ENCODE measurements at regions of chr18 and their contacts with region 1.

Region 1: DNA sequence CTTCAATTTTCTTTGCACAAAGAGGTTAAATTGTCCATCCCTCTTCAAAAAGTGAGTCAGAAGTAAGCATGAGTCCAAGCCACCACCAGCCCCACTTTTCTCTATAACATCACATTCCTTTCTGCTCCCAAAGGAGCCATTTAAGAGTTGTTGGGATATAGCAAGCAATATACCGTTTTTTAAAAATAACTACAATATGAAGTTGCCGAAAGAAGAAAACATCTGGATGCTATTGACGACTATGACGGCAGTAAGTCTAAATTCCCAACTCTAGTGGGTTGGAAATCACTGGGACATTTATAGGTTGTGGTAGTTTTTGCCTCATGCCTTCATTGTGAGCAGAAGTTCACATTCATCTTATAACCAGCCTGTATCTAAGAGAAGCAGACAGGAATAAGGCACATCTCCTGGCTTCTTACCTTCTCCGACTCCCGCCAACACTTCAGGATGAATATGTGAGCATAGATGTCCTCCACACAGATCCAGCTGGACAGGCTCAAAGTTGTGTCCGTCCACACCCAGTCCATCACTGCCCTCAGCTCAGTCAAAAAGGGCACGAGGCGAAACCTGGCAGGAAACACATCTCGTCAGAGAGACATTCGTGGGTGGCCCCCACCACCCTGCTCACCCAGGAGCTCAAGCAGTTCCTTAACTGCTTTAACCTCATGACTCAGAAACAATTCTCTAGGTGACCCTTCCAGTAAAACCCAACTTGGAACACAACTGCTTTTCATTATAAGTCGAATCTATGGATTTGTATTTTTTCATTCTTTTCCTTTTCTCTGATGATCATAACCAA is 163.6 kb downstream of the NAPG start:
- DNase-seq: no peak
- ATAC-seq: no peak
- H3K4me3 Mint-ChIP-seq: no peak overlapping the region
- H3K27ac Mint-ChIP-seq: no peak overlapping the region
- H3K4me1 Mint-ChIP-seq: no peaks in the 10 kb centered on the region
- H3K27me3 Mint-ChIP-seq: peaks cover 2% of the 10 kb centered on the region

Region 2: GRCh38 chr18:10405816-10406663 is 283.4 kb before region 1 on chr18:
- CTCF ChIA-PET with region 1: no interaction called
- POLR2A ChIA-PET with region 1: interaction called, 10 read pairs
- DNase-seq: no peak
- ATAC-seq: no peak
- H3K4me3 Mint-ChIP-seq: no peak overlapping the region
- H3K27ac Mint-ChIP-seq: no peak overlapping the region
- H3K4me1 Mint-ChIP-seq: peaks cover 4% of the 10 kb centered on the region
- H3K27me3 Mint-ChIP-seq: peaks cover 7% of the 10 kb centered on the region